Psoas muscle (tissue), 8 donors: ENCODE measurements at regions of chr10 and their contacts with region 1.

Region 1: GRCh38 chr10:32367793-32368453 is 21.0 kb upstream of the EPC1 start:
- DNase-seq: peak; percentile 61 to 72
- ATAC-seq: peak; percentile 62 to 75 (median 70)
- H3K4me3 ChIP-seq: peak overlapping the region; percentile 42
- H3K27ac ChIP-seq: peak overlapping the region; percentile 13
- H3K4me1 ChIP-seq: peaks cover 21% of the 10 kb centered on the region
- H3K27me3 ChIP-seq: no peaks in the 10 kb centered on the region
- CTCF ChIP-seq: peak; percentile 79

Region 2: DNA sequence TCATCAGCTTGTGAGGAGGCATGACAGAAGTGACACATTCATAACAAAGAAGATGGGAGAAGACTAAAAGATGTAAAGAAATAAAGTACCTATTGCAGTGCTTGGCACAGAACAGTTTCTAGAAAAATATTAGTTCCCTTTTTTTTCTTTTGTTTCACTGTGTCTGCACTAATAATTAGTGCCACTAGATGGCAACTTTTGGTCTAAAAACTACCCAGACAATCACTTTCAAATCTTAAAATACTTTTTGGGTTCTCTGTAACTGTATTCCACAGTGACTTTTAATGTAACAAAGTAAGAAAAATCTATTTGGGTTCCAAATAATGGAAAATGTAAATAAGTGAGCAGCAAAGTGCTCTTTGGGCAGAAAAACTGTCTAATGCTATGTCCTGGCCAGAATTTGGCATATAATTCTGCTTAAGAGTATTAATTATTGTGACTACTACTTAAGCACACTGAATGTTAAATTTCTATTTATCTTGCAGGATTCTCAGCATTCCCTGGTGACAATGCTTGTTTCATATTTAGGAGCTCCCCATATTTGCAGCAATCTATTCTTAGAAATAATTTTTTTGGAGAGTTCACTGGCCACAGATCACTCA is 176.9 kb before region 1 on chr10:
- intact Hi-C with region 1: loop called (anchors 1 to 2 kb)
- DNase-seq: no peak
- ATAC-seq: peak in 2 of 4 donors; percentile 39 to 67
- H3K4me3 ChIP-seq: no peak overlapping the region
- H3K27ac ChIP-seq: no peak overlapping the region
- H3K4me1 ChIP-seq: no peaks in the 10 kb centered on the region
- H3K27me3 ChIP-seq: no peaks in the 10 kb centered on the region
- CTCF ChIP-seq: peak; percentile 82

Region 3: GRCh38 chr10:32256613-32257437 is 111.1 kb before region 1 on chr10:
- intact Hi-C with region 1: loop called (anchors 2 to 5 kb)
- DNase-seq: peak; percentile 44 to 68
- ATAC-seq: peak; percentile 37 to 84 (median 68)
- H3K4me3 ChIP-seq: no peak overlapping the region
- H3K27ac ChIP-seq: no peak overlapping the region
- H3K4me1 ChIP-seq: no peaks in the 10 kb centered on the region
- H3K27me3 ChIP-seq: no peaks in the 10 kb centered on the region
- CTCF ChIP-seq: peak; percentile 81

Region 4: GRCh38 chr10:32413513-32413912 is 45.6 kb after region 1 on chr10:
- intact Hi-C with region 1: no loop called
- DNase-seq: no peak
- ATAC-seq: peak in 2 of 4 donors; percentile 36 to 37
- H3K4me3 ChIP-seq: no peak overlapping the region
- H3K27ac ChIP-seq: no peak overlapping the region
- H3K4me1 ChIP-seq: peaks cover 17% of the 10 kb centered on the region
- H3K27me3 ChIP-seq: no peaks in the 10 kb centered on the region
- CTCF ChIP-seq: no peak